Mammary epithelial cell (primary cell): ENCODE measurements at regions of chr7 and their contacts with region 1.

Region 1: DNA sequence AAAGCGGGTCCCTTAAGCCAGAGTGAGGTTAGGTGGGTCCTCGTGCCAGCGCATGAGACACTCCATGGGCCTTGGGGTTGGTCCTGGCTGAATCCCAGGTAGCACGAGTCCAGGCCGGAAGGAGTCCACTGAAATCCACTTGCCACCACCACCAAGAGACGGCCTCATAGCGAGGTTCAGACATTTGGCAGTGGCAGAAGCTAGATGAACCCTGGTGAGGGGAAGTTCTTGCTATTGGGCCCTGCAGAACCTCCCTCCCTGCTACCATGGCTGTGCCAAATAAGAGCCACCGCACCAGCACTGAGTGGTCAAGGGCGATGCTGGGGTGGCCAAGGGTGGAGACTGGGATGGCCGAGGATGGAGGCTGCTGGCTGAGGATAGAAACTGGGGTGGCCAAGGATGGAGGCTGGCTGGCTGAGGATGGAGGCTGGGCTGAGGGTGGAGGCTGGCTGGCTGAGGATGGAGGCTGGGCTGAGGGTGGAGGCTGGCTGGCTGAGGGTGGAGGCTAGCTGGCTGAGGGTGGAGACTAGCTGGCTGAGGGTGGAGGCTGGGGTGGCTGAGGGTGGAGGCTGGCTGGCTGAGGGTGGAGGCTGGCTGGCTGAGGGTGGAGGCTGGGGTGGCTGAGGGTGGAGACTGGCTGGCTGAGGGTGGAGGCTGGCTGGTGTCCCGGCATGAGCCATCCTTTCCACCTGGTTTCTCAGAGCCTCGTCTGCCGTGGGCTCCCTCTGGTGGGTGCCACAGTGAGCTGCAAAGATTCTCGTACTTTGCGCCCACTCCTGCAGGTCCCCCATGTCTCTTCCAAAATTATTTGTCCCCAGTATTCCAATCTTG is 88.2 kb downstream of the ELFN1 start:
- DNase-seq: peak; percentile 11
- H3K4me3 ChIP-seq: no peak overlapping the region
- H3K27ac ChIP-seq: no peak overlapping the region
- H3K4me1 ChIP-seq: no peaks in the 10 kb centered on the region
- H3K27me3 ChIP-seq: no peaks in the 10 kb centered on the region
- CTCF ChIP-seq: peak in 1 of 2 donors; percentile 43

Region 2: DNA sequence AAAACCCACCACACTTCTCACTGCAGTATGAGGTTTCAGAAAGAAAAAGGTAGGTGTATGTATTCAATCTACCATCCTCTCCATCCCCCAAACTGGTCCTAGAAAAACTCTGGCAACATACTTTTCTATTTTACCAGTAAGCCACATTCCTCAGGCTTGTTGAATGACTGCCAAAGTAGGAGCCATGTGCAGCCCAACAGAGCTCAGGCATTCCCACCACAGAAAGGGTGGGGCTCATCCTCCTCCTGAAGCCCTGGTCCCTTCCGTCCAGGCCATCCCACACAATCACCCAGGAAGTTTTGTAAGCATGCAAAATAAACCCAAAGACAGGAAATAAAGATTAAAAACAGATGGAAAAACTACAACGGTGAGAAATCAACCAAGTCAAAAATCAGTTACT is 417.3 kb after region 1 on chr7:
- CTCF ChIA-PET with region 1: interaction called, 12 read pairs
- dilution Hi-C with region 1: no loop called
- in situ Hi-C with region 1: no loop called
- intact Hi-C with region 1: no loop called
- DNase-seq: peak; percentile 79
- H3K4me3 ChIP-seq: no peak overlapping the region
- H3K27ac ChIP-seq: no peak overlapping the region
- H3K4me1 ChIP-seq: peaks cover 28% of the 10 kb centered on the region
- H3K27me3 ChIP-seq: no peaks in the 10 kb centered on the region
- CTCF ChIP-seq: no peak